Heart left ventricle (tissue), 16 donors: ENCODE measurements at regions of chr4 and their contacts with region 1.

Region 1: DNA sequence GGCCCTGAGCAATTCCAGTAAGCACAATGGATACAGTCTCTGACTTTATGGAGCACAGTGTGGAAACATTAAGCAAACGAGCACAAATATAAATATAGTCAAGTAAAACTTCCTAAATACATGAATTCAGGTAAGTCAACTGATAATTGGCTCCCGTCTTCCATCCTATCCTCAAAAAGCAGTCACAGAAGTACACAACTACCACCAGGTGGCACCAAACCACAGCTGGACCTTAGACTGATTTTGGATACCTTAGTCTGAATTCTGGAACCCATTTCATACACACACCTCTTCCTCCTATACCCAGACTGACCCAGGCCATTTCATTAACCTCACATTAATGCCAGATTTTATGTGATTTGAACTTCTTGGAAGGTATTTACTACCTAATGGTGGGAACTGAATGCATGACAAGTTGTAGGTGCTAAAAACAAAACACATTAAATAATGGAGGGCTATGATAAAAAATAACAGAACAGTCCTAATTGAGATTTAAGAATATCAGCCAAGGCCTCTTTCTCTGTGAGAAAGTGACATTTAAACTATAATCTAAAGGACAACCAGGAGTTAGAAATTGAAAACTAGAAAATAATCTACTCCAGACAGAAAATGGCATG is 77.5 kb downstream of the ELF2 start:
- DNase-seq: peak in 4 of 5 donors; percentile 60 to 73 (median 69)
- ATAC-seq: peak in 3 of 4 donors; percentile 71 to 86 (median 77)
- H3K4me3 ChIP-seq: no peak overlapping the region
- H3K27ac ChIP-seq: no peak overlapping the region
- H3K4me1 ChIP-seq: peaks cover 0 to 5% (median 0%) of the 10 kb centered on the region in 12 donors
- H3K27me3 ChIP-seq: no peaks in the 10 kb centered on the region
- CTCF ChIP-seq: peak; percentile 77 to 93 (median 84)
- POLR2A ChIP-seq: no peak

Region 2: DNA sequence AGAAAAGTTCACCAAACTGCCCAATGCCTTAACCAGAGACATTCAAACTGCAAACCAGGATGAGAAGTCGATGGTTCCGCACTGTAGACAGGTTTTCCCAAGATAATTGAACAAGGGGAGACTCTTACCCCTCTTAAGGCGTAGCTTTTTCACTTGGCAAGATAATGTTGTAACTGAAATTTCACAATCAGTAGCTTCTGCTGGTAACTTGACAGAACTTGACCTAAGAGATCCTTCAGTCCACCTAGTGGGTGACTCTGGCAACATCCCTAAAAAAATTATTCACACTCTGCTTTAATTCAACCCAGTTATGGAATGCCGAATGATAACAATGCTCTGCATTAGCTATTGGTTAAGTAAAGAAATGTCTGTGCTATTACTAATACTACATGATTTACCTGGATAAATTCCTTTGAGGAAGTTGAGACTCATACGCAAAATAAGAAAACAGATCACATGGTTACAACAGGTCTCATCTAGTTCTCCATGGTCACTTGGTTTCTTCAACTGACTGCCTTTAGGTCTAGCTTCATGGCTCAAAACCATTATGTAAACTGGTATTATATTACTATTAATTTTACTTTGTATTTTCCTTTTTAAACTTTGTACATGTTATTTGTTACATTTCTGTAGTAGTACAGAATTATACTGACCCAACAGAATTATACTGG is 68.4 kb after region 1 on chr4:
- intact Hi-C with region 1: loop called in 5 of 10 experiments (anchors 5 kb)
- DNase-seq: no peak
- ATAC-seq: peak in 3 of 4 donors; percentile 55 to 77 (median 61)
- H3K4me3 ChIP-seq: no peak overlapping the region
- H3K27ac ChIP-seq: peak overlapping the region in 1 of 12 donors; percentile 43
- H3K4me1 ChIP-seq: peaks cover 8 to 78% (median 40%) of the 10 kb centered on the region in 12 donors
- H3K27me3 ChIP-seq: no peaks in the 10 kb centered on the region
- CTCF ChIP-seq: peak; percentile 15 to 54 (median 38)
- POLR2A ChIP-seq: no peak

Region 3: DNA sequence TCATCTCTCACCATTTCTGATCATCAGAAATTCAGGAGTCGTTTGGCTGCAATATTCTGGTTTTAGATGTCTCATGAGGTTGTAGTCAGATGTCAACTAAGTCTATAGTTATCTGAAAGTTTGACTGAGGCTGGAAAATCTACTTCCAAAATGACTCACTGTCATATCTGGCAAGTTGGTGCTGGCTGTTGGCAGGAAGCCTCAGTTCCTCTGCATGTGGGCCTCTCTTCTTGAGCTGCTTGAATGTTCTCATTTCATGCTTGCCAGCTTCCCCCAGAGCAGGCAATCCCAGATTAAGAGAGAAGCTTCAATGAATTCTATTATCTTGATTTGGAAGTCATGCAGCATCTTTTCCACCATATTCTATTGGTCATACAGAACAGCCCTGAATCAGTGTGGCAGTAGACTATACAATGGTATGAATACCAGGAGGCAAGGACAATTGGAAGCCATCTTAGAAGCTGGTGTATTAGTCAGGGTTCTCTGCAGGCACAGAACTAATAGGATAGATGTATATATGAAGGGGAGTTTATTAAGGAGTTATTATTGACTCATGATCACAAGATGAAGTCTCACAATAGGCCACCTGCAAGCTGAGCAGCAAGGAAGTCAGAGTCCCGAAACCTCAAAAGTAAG is 124.3 kb after region 1 on chr4:
- intact Hi-C with region 1: loop called in 4 of 10 experiments (anchors 5 kb)
- DNase-seq: peak in 4 of 5 donors; percentile 20 to 68 (median 55)
- ATAC-seq: peak in 3 of 4 donors; percentile 28 to 66 (median 58)
- H3K4me3 ChIP-seq: no peak overlapping the region
- H3K27ac ChIP-seq: peak overlapping the region in 1 of 12 donors; percentile 4
- H3K4me1 ChIP-seq: peaks cover 0 to 8% (median 4%) of the 10 kb centered on the region in 12 donors
- H3K27me3 ChIP-seq: no peaks in the 10 kb centered on the region
- CTCF ChIP-seq: no peak
- POLR2A ChIP-seq: no peak

Region 4: DNA sequence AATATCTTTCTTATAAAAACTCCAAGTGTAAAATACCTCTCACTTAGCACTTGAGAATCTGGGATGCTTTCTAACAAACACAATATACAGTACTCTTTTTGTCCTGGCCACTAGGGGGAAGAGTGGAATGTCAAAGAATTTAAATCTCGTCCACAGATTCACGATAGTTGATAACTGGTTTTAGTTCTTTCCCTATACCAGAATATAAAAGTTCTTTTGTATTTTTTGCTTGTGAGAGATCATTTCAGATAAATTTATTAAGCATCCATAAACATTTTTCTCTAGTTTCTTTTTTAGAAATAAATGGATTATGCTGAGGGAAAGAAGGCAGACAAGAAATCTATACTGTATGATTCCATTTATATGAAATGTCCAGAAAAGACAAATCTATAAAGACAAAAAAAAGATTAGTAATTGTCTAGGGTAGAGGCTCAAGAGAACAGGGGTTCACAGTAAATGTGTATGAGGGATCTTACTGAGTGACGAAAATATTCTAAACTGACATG is 130.1 kb after region 1 on chr4:
- intact Hi-C with region 1: loop called in 4 of 10 experiments (anchors 5 kb)
- DNase-seq: no peak
- ATAC-seq: peak in 2 of 4 donors; percentile 60 to 67
- H3K4me3 ChIP-seq: no peak overlapping the region
- H3K27ac ChIP-seq: no peak overlapping the region
- H3K4me1 ChIP-seq: no peaks in the 10 kb centered on the region
- H3K27me3 ChIP-seq: no peaks in the 10 kb centered on the region
- CTCF ChIP-seq: peak; percentile 53 to 78 (median 67)
- POLR2A ChIP-seq: no peak

Region 5: DNA sequence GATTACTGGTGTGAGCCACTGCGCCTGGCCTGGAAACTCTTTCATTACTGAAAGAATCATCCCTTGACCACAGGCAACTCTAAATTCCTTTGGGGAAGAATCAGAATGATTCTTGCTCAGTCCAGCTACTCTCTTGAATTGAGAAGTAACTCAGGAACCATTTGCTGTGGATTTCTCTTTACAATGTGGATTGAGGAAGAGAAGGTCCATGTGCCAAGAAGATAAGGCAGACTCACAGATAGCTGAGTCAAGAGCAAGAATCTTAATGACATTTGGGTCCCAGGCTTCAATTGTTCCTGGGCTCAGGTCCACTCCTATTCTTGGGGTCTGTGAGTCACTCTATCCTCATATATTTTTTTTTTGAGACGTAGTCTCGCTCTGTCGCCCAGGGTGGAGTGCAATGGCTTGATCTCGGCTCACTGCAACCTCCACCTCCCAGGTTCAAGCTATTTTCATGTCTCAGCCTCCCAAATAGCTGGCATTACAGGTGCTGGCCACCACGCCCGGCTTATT is 186.8 kb after region 1 on chr4:
- intact Hi-C with region 1: loop called in 2 of 10 experiments (anchors 5 to 10 kb)
- DNase-seq: no peak
- ATAC-seq: peak in 2 of 4 donors; percentile 77 to 83
- H3K4me3 ChIP-seq: no peak overlapping the region
- H3K27ac ChIP-seq: peak overlapping the region in 1 of 12 donors; percentile 54
- H3K4me1 ChIP-seq: peaks cover 0 to 6% (median 0%) of the 10 kb centered on the region in 12 donors
- H3K27me3 ChIP-seq: no peaks in the 10 kb centered on the region
- CTCF ChIP-seq: no peak
- POLR2A ChIP-seq: no peak

Region 6: DNA sequence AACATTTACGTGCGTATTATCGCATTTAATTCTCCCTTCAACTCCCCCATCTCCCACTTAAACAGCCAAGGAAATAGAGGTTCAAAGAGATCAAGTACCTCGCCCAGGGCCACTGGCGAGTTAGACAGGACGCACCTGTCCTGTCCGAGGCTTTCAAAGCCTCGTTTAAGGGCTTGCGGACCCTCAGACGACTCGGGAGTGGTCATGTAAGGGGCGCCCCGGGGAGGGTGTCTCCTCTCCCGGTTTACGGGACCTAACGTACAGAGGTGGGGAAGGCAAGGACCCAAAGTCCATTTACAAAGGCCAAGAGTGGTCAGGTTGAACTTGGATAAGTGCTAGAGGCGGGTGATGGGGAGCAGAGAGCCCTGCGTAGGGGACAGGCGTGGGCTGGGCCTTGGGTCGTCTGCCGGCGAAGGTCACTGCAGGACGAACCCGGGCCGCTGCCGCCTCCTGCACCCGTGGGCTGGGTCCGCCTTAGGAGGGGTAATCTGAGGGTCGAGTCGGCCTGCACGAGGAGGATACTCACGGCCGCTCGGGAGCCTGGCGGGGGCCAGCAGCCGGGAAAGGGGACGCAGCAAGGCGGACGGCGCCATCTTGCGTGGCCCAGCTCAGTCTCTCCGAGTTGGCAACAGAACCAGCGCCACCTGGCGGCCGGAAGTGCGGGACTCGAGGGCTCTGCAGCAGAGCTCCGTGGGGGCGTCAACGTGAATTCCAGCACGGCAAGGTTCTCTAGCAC is 195.9 kb after region 1 on chr4:
- intact Hi-C with region 1: loop called in 9 of 10 experiments (anchors 1 to 5 kb)
- DNase-seq: peak; percentile 96 to 99 (median 98)
- ATAC-seq: peak; percentile 91 to 97 (median 96)
- H3K4me3 ChIP-seq: peak overlapping the region; percentile 61 to 85 (median 71)
- H3K27ac ChIP-seq: peak overlapping the region; percentile 75 to 93 (median 85)
- H3K4me1 ChIP-seq: peaks cover 0 to 49% (median 28%) of the 10 kb centered on the region in 12 donors
- H3K27me3 ChIP-seq: no peaks in the 10 kb centered on the region
- CTCF ChIP-seq: peak; percentile 84 to 99 (median 96)
- POLR2A ChIP-seq: peak in 1 of 2 donors; percentile 49

Region 7: DNA sequence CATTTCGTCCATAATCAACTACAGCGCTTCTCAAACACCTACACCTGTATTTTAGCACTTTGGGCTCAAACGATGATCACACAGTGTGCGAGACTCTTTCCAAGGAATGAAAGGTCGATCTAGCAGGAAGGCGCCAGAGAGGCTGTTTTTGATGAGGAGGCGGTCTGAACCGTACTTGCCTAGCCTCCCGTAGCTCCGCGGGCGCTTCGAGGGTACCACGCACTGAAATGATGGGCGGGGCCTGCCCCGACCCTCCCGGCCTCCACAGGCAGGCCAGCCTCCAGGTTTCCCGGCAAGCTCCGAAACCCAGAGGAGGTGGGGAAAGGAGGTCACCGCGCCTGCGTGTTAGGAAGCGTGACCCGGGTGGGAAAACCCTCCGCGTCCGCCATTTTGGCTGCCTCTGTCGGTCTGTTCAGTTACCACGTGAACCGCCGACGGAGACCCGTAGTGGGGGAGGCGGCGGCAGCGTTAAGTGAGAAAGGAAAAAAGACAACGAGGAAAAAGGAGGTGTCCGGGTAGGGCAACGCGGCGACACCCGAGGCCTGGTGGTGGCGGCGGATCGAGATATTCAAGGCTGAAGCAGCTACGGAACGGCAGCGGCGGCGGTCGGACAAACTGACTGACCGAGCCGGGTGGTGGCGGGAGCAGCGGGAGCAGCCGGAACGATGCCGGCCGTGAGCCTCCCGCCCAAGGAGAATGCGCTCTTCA is 201.8 kb after region 1 on chr4 and contains the start of gene NAA15:
- intact Hi-C with region 1: loop called in 7 of 10 experiments (anchors 1 to 5 kb)
- DNase-seq: peak; percentile 98 to 99 (median 98)
- ATAC-seq: peak; percentile 96 to 98 (median 97)
- H3K4me3 ChIP-seq: peak within 1 kb of the TSS; percentile 77 to 97 (median 93)
- H3K27ac ChIP-seq: peak within 1 kb of the TSS; percentile 81 to 97 (median 92)
- H3K4me1 ChIP-seq: peaks cover 2 to 53% (median 25%) of the 10 kb centered on the region in 12 donors
- H3K27me3 ChIP-seq: no peaks in the 10 kb centered on the region
- CTCF ChIP-seq: peak in 1 of 12 donors; percentile 8
- POLR2A ChIP-seq: peak in 1 of 2 donors; percentile 77
- total RNA-seq, gene NAA15: 18.6 to 50.8 (median 33.0) TPM